ENCODE measurements at regions of chr12 and their contacts with region 1.

Region 1: DNA sequence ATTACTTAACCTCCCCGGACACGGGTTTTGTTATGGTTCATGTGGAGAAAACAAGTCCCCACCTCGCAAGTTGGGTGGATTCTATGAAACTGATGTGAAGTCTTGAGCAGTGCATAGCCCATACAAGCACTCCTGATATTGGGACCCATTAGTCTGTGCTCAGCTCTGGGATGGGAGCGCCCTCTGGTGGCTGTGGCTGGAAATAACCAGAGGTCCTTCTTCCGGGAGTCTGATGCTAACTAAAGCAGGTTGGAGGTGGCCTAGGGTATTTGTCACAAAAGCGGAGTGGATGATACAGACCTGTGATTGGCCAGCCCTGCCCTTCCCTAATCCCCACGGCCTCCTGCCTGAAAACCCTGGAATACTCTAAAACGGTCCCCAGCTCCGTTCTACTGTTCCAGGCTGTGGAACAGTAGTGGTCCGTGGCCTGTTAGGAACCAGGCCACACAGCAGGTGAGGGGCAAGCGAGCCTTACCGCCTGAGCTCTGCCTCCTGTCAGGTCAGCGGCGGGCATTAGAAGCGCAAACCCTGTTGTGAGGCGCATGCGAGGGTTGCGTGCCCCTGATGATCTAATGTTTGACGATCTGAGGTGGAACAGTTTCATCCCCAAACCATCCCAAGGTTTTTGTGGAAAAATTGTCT is 6.4 kb downstream of the SLC48A1 start:
- DNase-seq: peak; percentile 88
- H3K4me3 Mint-ChIP-seq: no peak overlapping the region
- H3K27ac Mint-ChIP-seq: no peak overlapping the region
- H3K4me1 Mint-ChIP-seq: peaks cover 30% of the 10 kb centered on the region
- H3K27me3 Mint-ChIP-seq: no peaks in the 10 kb centered on the region
- CTCF ChIP-seq: peak; percentile 89

Region 2: GRCh38 chr12:47651368-47652254 is 127.8 kb before region 1 on chr12:
- CTCF ChIA-PET with region 1: interaction called, 3 read pairs
- POLR2A ChIA-PET with region 1: interaction called, 3 read pairs
- intact Hi-C with region 1: loop called (anchors 5 kb)
- DNase-seq: peak; percentile 79
- H3K4me3 Mint-ChIP-seq: peak overlapping the region; percentile 21
- H3K27ac Mint-ChIP-seq: no peak overlapping the region
- H3K4me1 Mint-ChIP-seq: no peaks in the 10 kb centered on the region
- H3K27me3 Mint-ChIP-seq: no peaks in the 10 kb centered on the region
- CTCF ChIP-seq: peak; percentile 64

Region 3: GRCh38 chr12:47767216-47767724 is 12.2 kb before region 1 on chr12:
- CTCF ChIA-PET with region 1: interaction called, 86 read pairs
- POLR2A ChIA-PET with region 1: interaction called, 3 read pairs
- intact Hi-C with region 1: no loop called
- DNase-seq: peak; percentile 82
- H3K4me3 Mint-ChIP-seq: no peak overlapping the region
- H3K27ac Mint-ChIP-seq: peak overlapping the region; percentile 57
- H3K4me1 Mint-ChIP-seq: peaks cover 23% of the 10 kb centered on the region
- H3K27me3 Mint-ChIP-seq: no peaks in the 10 kb centered on the region
- CTCF ChIP-seq: peak; percentile 47

Region 4: GRCh38 chr12:47797441-47797840 is 18.0 kb after region 1 on chr12:
- CTCF ChIA-PET with region 1: interaction called, 11 read pairs
- POLR2A ChIA-PET with region 1: no interaction called
- intact Hi-C with region 1: no loop called
- DNase-seq: no peak
- H3K4me3 Mint-ChIP-seq: no peak overlapping the region
- H3K27ac Mint-ChIP-seq: no peak overlapping the region
- H3K4me1 Mint-ChIP-seq: peaks cover 5% of the 10 kb centered on the region
- H3K27me3 Mint-ChIP-seq: no peaks in the 10 kb centered on the region
- CTCF ChIP-seq: no peak

Region 5: DNA sequence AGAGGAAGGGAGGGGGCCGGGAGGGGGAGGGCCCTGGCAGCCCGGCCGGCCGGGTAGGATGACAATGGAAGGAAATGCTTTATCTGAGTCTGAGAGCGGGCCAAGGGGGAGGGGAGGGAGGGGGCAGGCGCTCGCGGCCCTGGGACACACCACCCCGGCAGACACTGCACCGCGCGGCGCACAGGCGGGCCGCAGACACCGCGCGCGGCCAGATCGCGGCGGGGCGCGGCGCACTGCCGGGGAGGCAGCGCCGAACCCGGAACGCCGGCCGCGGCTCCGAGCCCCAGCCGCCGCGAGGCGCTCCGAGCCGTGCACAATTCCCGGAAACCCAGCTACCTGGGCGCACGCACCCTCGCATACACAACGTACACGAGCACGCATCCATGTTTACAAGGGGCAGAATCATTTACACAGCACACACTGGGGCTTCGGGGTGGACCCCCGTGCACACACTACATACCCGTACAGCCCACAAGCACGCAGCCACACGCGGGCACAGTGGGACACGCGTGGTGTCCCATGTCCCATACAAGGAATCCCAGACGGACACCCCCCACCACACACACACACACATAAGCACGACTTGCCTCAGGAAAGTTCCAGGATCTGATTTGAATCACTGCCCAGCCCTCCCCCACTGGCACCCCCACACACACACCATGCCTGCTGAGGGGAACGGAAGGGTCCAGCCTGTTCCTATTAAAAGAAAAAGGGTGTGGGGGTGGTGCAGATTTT is 40.6 kb after region 1 on chr12 and contains the start of gene HDAC7:
- CTCF ChIA-PET with region 1: interaction called, 622 read pairs
- POLR2A ChIA-PET with region 1: interaction called, 4 read pairs
- intact Hi-C with region 1: loop called (anchors 5 kb)
- DNase-seq: peak; percentile 81
- H3K4me3 Mint-ChIP-seq: peak within 1 kb of the TSS; percentile 98
- H3K27ac Mint-ChIP-seq: peak within 1 kb of the TSS; percentile 93
- H3K4me1 Mint-ChIP-seq: peaks cover 73% of the 10 kb centered on the region
- H3K27me3 Mint-ChIP-seq: no peaks in the 10 kb centered on the region
- CTCF ChIP-seq: no peak
- total RNA-seq, gene HDAC7: 65.0 and 80.1 TPM in 2 replicates